Stomach (tissue), 19 donors: ENCODE measurements at regions of chr2 and their contacts with region 1.

Region 1: GRCh38 chr2:174992886-174993285 is 12.3 kb downstream of the CHN1 start:
- DNase-seq: no peak
- H3K4me3 ChIP-seq: no peak overlapping the region
- H3K27ac ChIP-seq: no peak overlapping the region
- H3K4me1 ChIP-seq: peaks cover 0 to 9% (median 0%) of the 10 kb centered on the region in 4 donors
- H3K27me3 ChIP-seq: no peaks in the 10 kb centered on the region
- CTCF ChIP-seq: no peak
- EP300 ChIP-seq: no peak
- POLR2A ChIP-seq: no peak

Region 2: DNA sequence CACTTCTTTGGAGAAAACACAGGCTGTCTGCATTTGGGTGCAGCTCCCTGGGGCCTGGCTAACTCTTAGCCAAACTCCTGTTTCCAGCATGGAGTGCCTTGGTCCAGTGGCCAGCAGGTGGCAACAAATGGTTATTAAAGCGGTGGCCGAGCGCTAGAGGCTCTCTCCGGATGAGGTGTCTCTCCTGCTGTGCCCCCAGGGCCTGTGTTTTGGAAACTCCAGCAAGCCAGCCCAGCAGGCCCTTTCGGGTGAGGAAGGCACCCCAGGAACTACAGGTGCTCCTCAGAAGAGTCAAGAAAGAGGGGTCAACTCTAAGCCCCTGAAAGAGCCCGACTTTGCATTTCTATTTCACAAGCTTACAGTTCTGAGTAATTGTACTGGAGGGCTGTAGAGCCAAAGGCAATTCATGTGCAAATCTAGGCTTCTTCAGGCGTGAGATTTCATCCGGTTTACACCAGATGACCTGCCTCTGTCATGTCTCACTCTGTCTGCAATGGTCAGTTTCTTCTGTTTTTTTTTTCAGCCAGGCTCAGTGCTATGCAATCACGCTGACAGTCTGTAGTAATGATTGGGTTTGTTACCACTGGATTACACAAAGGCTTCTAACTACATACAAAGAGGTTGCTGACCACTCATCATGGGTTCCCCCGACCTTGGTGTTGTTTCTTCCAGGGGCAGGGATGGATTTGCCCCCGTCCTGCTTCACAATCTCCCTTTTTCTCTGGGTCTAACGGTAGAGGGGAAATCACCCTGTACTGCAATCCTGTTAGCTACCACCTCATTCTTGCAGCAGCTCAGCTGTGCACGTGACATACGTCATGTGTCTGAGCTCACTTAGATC is 221.0 kb before region 1 on chr2:
- intact Hi-C with region 1: loop called (anchors 5 kb)
- DNase-seq: peak; percentile 69 to 89
- H3K4me3 ChIP-seq: peak overlapping the region in 1 of 4 donors; percentile 9
- H3K27ac ChIP-seq: peak overlapping the region in 2 of 5 donors; percentile 25 to 45
- H3K4me1 ChIP-seq: peaks cover 0 to 14% (median 5%) of the 10 kb centered on the region in 4 donors
- H3K27me3 ChIP-seq: peaks cover 0 to 3% (median 0%) of the 10 kb centered on the region in 3 donors
- CTCF ChIP-seq: peak in 5 of 7 experiments; percentile 47 to 75 (median 73)
- EP300 ChIP-seq: no peak
- POLR2A ChIP-seq: no peak